Transverse colon (tissue), 4 donors: ENCODE measurements at regions of chr3 and their contacts with region 1.

Region 1: GRCh38 chr3:184531626-184532280 is 29.8 kb upstream of the EPHB3 start:
- DNase-seq: no peak
- H3K4me3 ChIP-seq: no peak overlapping the region
- H3K27ac ChIP-seq: no peak overlapping the region
- H3K4me1 ChIP-seq: no peaks in the 10 kb centered on the region
- H3K27me3 ChIP-seq: peaks cover 59% of the 10 kb centered on the region
- CTCF ChIP-seq: no peak
- EP300 ChIP-seq: no peak
- POLR2A ChIP-seq: no peak

Region 2: GRCh38 chr3:184218814-184219213 is 312.9 kb before region 1 on chr3:
- in situ Hi-C with region 1: no loop called
- intact Hi-C with region 1: no loop called
- DNase-seq: no peak
- H3K4me3 ChIP-seq: no peak overlapping the region
- H3K27ac ChIP-seq: no peak overlapping the region
- H3K4me1 ChIP-seq: no peaks in the 10 kb centered on the region
- H3K27me3 ChIP-seq: peaks cover 25% of the 10 kb centered on the region
- CTCF ChIP-seq: no peak
- EP300 ChIP-seq: no peak
- POLR2A ChIP-seq: no peak

Region 3: GRCh38 chr3:184371570-184372018 is 160.2 kb before region 1 on chr3:
- in situ Hi-C with region 1: loop called in 1 of 4 experiments (anchors 10 kb)
- intact Hi-C with region 1: no loop called
- DNase-seq: peak; percentile 78
- H3K4me3 ChIP-seq: no peak overlapping the region
- H3K27ac ChIP-seq: no peak overlapping the region
- H3K4me1 ChIP-seq: peaks cover 0 to 7% (median 0%) of the 10 kb centered on the region in 4 donors
- H3K27me3 ChIP-seq: peaks cover 11% of the 10 kb centered on the region
- CTCF ChIP-seq: peak; percentile 85 to 93 (median 91)
- EP300 ChIP-seq: no peak
- POLR2A ChIP-seq: no peak

Region 4: DNA sequence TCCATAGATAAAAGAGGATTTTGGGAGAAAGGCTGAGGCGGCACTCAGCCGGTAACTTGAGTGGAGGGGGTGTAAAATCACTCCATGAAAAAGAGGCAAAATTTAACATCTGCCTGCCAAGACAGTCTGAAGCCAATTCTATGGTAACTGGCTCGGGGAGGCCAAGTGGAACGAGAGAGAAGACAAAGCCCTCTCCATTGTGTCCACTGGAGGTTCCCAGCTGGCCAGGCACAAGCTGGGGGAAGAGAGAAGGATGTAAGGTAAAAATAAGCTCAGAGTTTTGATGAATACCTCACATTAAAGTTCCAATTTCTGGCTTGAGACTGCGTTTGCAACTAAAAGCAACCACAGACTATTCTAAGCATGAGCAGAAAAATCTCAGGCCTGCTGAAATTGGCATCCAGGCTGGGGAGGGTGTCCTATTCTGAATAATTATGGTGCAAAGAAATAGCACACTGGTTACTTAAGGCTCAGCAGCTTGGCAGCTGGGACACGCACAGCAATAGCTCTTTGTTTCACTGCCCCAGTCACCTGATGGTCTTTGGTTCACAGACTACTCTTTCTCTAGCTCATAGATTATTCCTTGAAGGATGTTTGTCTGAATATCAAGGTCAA is 103.1 kb before region 1 on chr3:
- in situ Hi-C with region 1: loop called in 2 of 4 experiments (anchors 10 to 25 kb)
- intact Hi-C with region 1: no loop called
- DNase-seq: no peak
- H3K4me3 ChIP-seq: no peak overlapping the region
- H3K27ac ChIP-seq: no peak overlapping the region
- H3K4me1 ChIP-seq: no peaks in the 10 kb centered on the region
- H3K27me3 ChIP-seq: no peaks in the 10 kb centered on the region
- CTCF ChIP-seq: no peak
- EP300 ChIP-seq: no peak
- POLR2A ChIP-seq: no peak